Naive thymus-derived CD4-positive, alpha-beta T cell (primary cell): ENCODE measurements at regions of chr13 and their contacts with region 1.

Region 1: DNA sequence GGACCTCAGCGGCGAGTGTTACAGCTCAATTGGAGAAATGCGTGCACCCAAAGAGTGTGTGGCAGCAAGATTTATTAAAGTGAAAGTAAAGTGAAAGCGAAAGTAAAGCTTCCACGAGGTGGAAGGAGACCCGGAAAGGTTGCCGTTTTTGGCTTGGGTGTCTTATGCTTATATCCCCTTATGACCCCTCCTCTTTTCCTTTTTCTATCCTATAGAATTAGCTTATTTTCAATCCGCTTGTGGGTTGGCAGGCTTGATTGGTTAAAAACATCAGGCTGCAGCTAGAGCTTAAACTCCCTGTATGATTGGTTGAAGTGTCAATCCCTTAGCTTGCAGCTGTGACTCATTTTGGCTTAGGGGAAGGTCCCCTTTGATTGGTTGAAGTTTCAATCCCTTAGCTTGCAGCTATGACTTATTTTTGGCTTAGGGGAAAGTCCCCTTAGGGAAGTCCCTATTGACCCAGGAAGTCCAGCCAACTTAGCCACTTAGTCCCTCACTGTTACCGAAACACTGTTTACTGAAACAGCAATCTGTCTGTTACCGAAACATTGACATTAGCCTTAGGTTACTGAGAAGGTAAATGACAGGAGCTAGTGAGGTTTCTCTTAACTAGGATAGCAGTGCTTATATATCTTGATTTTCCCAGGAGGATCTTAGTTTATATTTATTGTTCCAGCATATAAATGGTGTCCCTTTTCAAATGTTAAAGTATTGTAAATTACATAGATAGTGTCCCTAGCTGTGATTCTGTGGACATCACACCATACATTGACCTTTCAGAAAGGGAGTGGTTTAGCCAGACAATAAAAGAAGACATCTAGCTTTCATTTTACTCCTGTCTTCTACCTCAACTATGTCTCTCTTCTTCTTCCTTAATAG is 575.8 kb downstream of the DACH1 start:
- DNase-seq: peak in 7 of 9 donors; percentile 62 to 78 (median 74)
- ATAC-seq: peak; percentile 81
- H3K4me3 ChIP-seq: peak overlapping the region; percentile 56
- H3K4me3 Mint-ChIP-seq: peak overlapping the region; percentile 78 to 94 (median 88)
- H3K27ac ChIP-seq: peak overlapping the region; percentile 56
- H3K27ac Mint-ChIP-seq: peak overlapping the region; percentile 83 to 95 (median 93)
- H3K4me1 ChIP-seq: peaks cover 0 to 9% of the 10 kb centered on the region in 2 donors
- H3K4me1 Mint-ChIP-seq: peaks cover 0 to 31% (median 18%) of the 10 kb centered on the region in 7 donors
- H3K27me3 ChIP-seq: no peaks in the 10 kb centered on the region
- H3K27me3 Mint-ChIP-seq: peaks cover 0 to 10% (median 6%) of the 10 kb centered on the region in 5 donors

Region 2: GRCh38 chr13:71378961-71379905 is 88.0 kb after region 1 on chr13:
- CTCF ChIA-PET with region 1: no interaction called
- POLR2A ChIA-PET with region 1: no interaction called
- intact Hi-C with region 1: no loop called
- DNase-seq: no peak
- ATAC-seq: no peak
- H3K4me3 ChIP-seq: no peak overlapping the region
- H3K4me3 Mint-ChIP-seq: peak overlapping the region in 1 of 10 donors; percentile 31
- H3K27ac ChIP-seq: no peak overlapping the region
- H3K27ac Mint-ChIP-seq: no peak overlapping the region
- H3K4me1 ChIP-seq: no peaks in the 10 kb centered on the region
- H3K4me1 Mint-ChIP-seq: peaks cover 0 to 2% (median 0%) of the 10 kb centered on the region in 7 donors
- H3K27me3 ChIP-seq: no peaks in the 10 kb centered on the region
- H3K27me3 Mint-ChIP-seq: no peaks in the 10 kb centered on the region

Region 3: DNA sequence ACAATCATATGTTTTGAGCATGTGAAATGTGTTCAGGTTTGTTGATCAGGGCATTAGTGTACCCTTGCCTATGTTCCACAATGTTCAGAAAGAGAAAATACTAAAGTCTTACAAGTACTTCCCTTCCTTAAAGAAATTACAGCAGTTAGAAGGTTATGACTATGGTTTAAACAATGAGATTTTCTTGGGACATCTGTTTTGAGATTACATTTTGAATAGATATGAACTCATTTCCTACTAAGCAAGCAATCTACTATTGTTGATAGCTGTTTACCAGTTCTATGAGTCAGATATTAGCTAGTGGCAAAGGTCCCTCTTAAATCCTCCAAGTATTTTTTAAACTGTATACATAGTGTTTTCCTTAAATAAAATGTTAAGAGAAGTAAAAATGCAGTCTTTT is 334.5 kb after region 1 on chr13:
- CTCF ChIA-PET with region 1: no interaction called
- POLR2A ChIA-PET with region 1: no interaction called
- intact Hi-C with region 1: no loop called
- DNase-seq: no peak
- ATAC-seq: no peak
- H3K4me3 ChIP-seq: no peak overlapping the region
- H3K4me3 Mint-ChIP-seq: no peak overlapping the region
- H3K27ac ChIP-seq: no peak overlapping the region
- H3K27ac Mint-ChIP-seq: no peak overlapping the region
- H3K4me1 ChIP-seq: no peaks in the 10 kb centered on the region
- H3K4me1 Mint-ChIP-seq: no peaks in the 10 kb centered on the region
- H3K27me3 ChIP-seq: no peaks in the 10 kb centered on the region
- H3K27me3 Mint-ChIP-seq: no peaks in the 10 kb centered on the region

Region 4: GRCh38 chr13:73058736-73059459 is 1767.7 kb after region 1 on chr13 and contains the start of gene KLF5:
- CTCF ChIA-PET with region 1: no interaction called
- POLR2A ChIA-PET with region 1: no interaction called
- intact Hi-C with region 1: loop called in 1 of 2 experiments (anchors 5 kb)
- DNase-seq: peak; percentile 93 to 98 (median 94)
- ATAC-seq: peak; percentile 98
- H3K4me3 ChIP-seq: peak within 1 kb of the TSS; percentile 58
- H3K4me3 Mint-ChIP-seq: peak within 1 kb of the TSS; percentile 82 to 94 (median 90)
- H3K27ac ChIP-seq: peak within 1 kb of the TSS; percentile 42
- H3K27ac Mint-ChIP-seq: peak within 1 kb of the TSS; percentile 38 to 92 (median 79)
- H3K4me1 ChIP-seq: peaks cover 4 to 10% of the 10 kb centered on the region in 2 donors
- H3K4me1 Mint-ChIP-seq: peaks cover 6 to 32% (median 23%) of the 10 kb centered on the region in 7 donors
- H3K27me3 ChIP-seq: peaks cover 5 to 10% of the 10 kb centered on the region in 2 donors
- H3K27me3 Mint-ChIP-seq: peaks cover 19 to 58% (median 40%) of the 10 kb centered on the region in 5 donors
- total RNA-seq, gene KLF5: 3.6 to 13.3 (median 5.7) TPM